Activated T-helper 2 cell treated with anti-CD3 and anti-CD28 coated beads, Interferon-gamma antibody, Interleukin-2, Interleukin-4, amounts not matched to agents 10 μg/mL and 5 μg/mL and 100 μg/mL, durations not matched to agents 14 hours and 24 hours and 36 hours (primary cell): ENCODE measurements at regions of chr10 and their contacts with region 1.

Region 1: GRCh38 chr10:129030996-129031843 is 435.8 kb upstream of the MGMT start:
- DNase-seq: peak; percentile 46
- H3K4me3 Mint-ChIP-seq: peak overlapping the region; percentile 22
- H3K27ac Mint-ChIP-seq: no peak overlapping the region
- H3K4me1 Mint-ChIP-seq: peaks cover 34% of the 10 kb centered on the region
- H3K27me3 Mint-ChIP-seq: peaks cover 21% of the 10 kb centered on the region

Region 2: DNA sequence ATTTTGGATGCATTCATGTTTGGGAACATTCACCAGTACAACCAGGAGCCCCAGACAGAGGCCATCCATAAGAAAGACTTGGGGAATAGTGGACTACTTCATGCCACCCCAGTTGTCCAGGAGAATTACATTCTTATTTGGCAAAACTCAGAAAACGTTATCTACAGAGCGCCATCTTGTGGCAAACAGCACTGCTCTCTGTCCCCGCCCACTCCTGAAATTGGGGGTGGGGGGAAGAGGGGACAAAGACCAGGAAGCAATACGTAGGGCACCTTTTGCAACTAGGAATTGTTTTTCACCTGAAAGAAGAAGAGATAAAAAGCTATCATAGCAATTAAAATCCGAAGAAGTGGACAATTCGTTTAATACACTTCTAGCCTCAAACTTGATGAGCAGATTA is 301.3 kb after region 1 on chr10:
- intact Hi-C with region 1: loop called (anchors 1 kb)
- DNase-seq: peak; percentile 11
- H3K4me3 Mint-ChIP-seq: no peak overlapping the region
- H3K27ac Mint-ChIP-seq: no peak overlapping the region
- H3K4me1 Mint-ChIP-seq: peaks cover 1% of the 10 kb centered on the region
- H3K27me3 Mint-ChIP-seq: peaks cover 8% of the 10 kb centered on the region

Region 3: GRCh38 chr10:129466703-129467358 is 435.6 kb after region 1 on chr10 and contains the start of gene MGMT:
- intact Hi-C with region 1: loop called (anchors 10 kb)
- DNase-seq: peak; percentile 93
- H3K4me3 Mint-ChIP-seq: peak within 1 kb of the TSS; percentile 78
- H3K27ac Mint-ChIP-seq: peak within 1 kb of the TSS; percentile 49
- H3K4me1 Mint-ChIP-seq: peaks cover 11% of the 10 kb centered on the region
- H3K27me3 Mint-ChIP-seq: peaks cover 2% of the 10 kb centered on the region
- total RNA-seq, gene MGMT: 15.8 and 17.5 TPM in 2 replicates

Region 4: GRCh38 chr10:129963641-129964501 is 932.7 kb after region 1 on chr10 and contains the start of gene EBF3:
- intact Hi-C with region 1: loop called (anchors 5 kb)
- DNase-seq: no peak
- H3K4me3 Mint-ChIP-seq: peak within 1 kb of the TSS; percentile 60
- H3K27ac Mint-ChIP-seq: peak within 1 kb of the TSS; percentile 49
- H3K4me1 Mint-ChIP-seq: peaks cover 3% of the 10 kb centered on the region
- H3K27me3 Mint-ChIP-seq: peaks cover 60% of the 10 kb centered on the region
- total RNA-seq, gene EBF3: not detected in 2 replicates

Region 5: GRCh38 chr10:130136226-130137089 is 1105.2 kb after region 1 on chr10 and contains the start of gene GLRX3:
- intact Hi-C with region 1: loop called (anchors 10 kb)
- DNase-seq: peak; percentile 81
- H3K4me3 Mint-ChIP-seq: peak within 1 kb of the TSS; percentile 92
- H3K27ac Mint-ChIP-seq: peak within 1 kb of the TSS; percentile 88
- H3K4me1 Mint-ChIP-seq: peaks cover 34% of the 10 kb centered on the region
- H3K27me3 Mint-ChIP-seq: no peaks in the 10 kb centered on the region
- total RNA-seq, gene GLRX3: 138 and 145 TPM in 2 replicates